Heart left ventricle (tissue), 16 donors: ENCODE measurements at regions of chr11 and their contacts with region 1.

Region 1: GRCh38 chr11:17760102-17761029 is 25.8 kb downstream of the KCNC1 start:
- DNase-seq: peak in 4 of 5 donors; percentile 30 to 63 (median 52)
- ATAC-seq: peak; percentile 67 to 93 (median 86)
- H3K4me3 ChIP-seq: no peak overlapping the region
- H3K27ac ChIP-seq: no peak overlapping the region
- H3K4me1 ChIP-seq: peaks cover 0 to 5% (median 0%) of the 10 kb centered on the region in 12 donors
- H3K27me3 ChIP-seq: no peaks in the 10 kb centered on the region
- CTCF ChIP-seq: peak; percentile 39 to 73 (median 62)
- POLR2A ChIP-seq: no peak

Region 2: GRCh38 chr11:17972987-17973386 is 212.6 kb after region 1 on chr11:
- intact Hi-C with region 1: loop called in 9 of 10 experiments (anchors 1 to 5 kb)
- DNase-seq: peak; percentile 56 to 70 (median 58)
- ATAC-seq: peak; percentile 67 to 92 (median 88)
- H3K4me3 ChIP-seq: no peak overlapping the region
- H3K27ac ChIP-seq: no peak overlapping the region
- H3K4me1 ChIP-seq: peaks cover 0 to 11% (median 0%) of the 10 kb centered on the region in 12 donors
- H3K27me3 ChIP-seq: no peaks in the 10 kb centered on the region
- CTCF ChIP-seq: peak; percentile 31 to 76 (median 58)
- POLR2A ChIP-seq: no peak